Activated naive CD4-positive, alpha-beta T cell treated with anti-CD3 and anti-CD28 coated beads, Interleukin-2, amount 10 ng/mL, durations not matched to agents 7 days and 5 days (primary cell): ENCODE measurements at regions of chr4 and their contacts with region 1.

Region 1: GRCh38 chr4:7802093-7802726 is 137.5 kb downstream of the AFAP1 start:
- DNase-seq: peak; percentile 88
- H3K4me3 Mint-ChIP-seq: no peak overlapping the region
- H3K27ac Mint-ChIP-seq: peak overlapping the region; percentile 15
- H3K4me1 Mint-ChIP-seq: peaks cover 17% of the 10 kb centered on the region
- H3K27me3 Mint-ChIP-seq: no peaks in the 10 kb centered on the region

Region 2: DNA sequence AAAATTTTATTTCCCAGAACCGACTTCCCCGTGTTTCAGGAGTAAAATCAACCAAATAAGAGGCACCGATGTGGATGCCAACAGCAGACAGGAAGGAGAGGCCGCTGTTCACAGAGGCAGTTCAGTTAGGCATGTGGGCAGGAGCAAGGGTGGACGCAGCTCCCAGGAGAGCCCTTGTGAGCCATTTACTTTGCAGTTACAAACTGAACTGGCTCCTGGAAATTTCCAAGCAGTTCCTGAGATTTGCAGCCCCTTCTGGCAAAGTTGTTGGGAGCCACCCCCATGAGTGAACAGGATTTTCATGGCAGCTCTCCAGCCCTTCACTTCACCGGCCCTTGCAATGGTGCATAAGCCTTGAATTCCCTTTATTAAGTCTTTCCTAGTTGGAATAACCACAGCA is 51.7 kb before region 1 on chr4:
- CTCF ChIA-PET with region 1: no interaction called
- DNase-seq: no peak
- H3K4me3 Mint-ChIP-seq: no peak overlapping the region
- H3K27ac Mint-ChIP-seq: no peak overlapping the region
- H3K4me1 Mint-ChIP-seq: peaks cover 42% of the 10 kb centered on the region
- H3K27me3 Mint-ChIP-seq: peaks cover 10% of the 10 kb centered on the region

Region 3: GRCh38 chr4:7770224-7771050 is 31.8 kb before region 1 on chr4:
- CTCF ChIA-PET with region 1: interaction called, 99 read pairs
- DNase-seq: peak; percentile 52
- H3K4me3 Mint-ChIP-seq: peak overlapping the region; percentile 63
- H3K27ac Mint-ChIP-seq: peak overlapping the region; percentile 84
- H3K4me1 Mint-ChIP-seq: peaks cover 29% of the 10 kb centered on the region
- H3K27me3 Mint-ChIP-seq: no peaks in the 10 kb centered on the region

Region 4: DNA sequence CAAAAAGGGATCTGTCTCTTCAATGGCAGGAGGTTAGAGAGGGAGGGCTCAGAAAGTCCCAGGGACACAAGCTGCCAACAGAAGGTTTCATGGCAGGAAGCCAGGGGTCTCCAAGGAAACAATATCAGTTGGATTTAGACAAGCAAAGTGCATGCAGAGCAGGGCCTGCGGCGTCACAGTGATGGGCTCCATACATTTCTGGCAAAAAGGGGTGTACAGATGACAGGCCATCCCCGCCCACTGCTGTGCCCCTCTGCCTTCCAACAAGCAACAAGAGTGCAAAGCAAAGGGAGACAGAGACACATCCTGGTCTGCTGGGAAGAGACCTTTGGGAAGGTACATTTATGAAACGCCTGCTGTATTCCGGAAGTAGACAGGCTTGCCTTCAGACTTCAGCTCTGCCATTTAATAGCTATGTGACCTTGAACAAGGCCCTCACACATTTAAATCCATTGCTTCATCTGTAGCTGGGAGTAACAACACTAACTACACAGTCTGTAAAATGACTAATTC is 16.2 kb after region 1 on chr4:
- CTCF ChIA-PET with region 1: interaction called, 30 read pairs
- DNase-seq: no peak
- H3K4me3 Mint-ChIP-seq: no peak overlapping the region
- H3K27ac Mint-ChIP-seq: no peak overlapping the region
- H3K4me1 Mint-ChIP-seq: peaks cover 15% of the 10 kb centered on the region
- H3K27me3 Mint-ChIP-seq: no peaks in the 10 kb centered on the region

Region 5: DNA sequence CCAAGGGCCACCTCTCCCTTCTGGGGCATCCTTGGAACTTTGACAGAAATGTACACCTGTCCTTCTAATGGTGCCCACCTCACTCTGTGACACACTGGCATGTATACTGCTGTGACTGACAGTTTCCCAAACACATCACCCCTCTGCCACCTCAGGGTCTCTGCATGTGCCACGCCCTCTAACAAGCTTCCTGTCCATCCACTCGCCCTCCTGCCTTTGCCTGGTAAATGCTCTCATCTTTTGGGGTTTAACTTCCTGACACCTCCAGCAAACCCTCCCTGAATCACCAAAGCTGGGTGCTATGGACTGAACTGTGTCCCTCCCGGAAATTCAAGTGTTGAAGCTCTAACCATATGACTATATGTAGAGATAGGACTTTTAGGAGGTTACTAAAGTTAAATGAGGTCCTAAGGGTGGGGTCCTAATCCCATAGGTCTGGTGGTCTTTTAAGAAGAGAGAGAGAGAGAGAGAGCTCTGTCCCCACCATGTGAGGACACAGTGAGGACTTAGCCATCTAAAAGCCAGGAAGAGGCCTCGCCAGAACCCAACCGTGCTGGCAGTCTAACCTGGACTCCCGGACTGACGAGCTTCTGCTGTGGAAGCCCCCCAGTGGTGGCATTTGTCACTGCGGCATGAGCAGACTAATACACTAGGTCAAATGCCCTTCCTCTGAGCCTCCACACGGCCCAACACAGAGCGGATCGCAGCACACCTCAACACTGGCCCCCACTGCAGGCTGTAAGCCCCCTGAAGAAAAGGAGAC is 41.8 kb after region 1 on chr4:
- CTCF ChIA-PET with region 1: interaction called, 56 read pairs
- DNase-seq: peak; percentile 80
- H3K4me3 Mint-ChIP-seq: no peak overlapping the region
- H3K27ac Mint-ChIP-seq: no peak overlapping the region
- H3K4me1 Mint-ChIP-seq: peaks cover 22% of the 10 kb centered on the region
- H3K27me3 Mint-ChIP-seq: no peaks in the 10 kb centered on the region

Region 6: GRCh38 chr4:7863911-7864681 is 61.9 kb after region 1 on chr4:
- CTCF ChIA-PET with region 1: interaction called, 10 read pairs
- DNase-seq: peak; percentile 38
- H3K4me3 Mint-ChIP-seq: peak overlapping the region; percentile 4
- H3K27ac Mint-ChIP-seq: peak overlapping the region; percentile 60
- H3K4me1 Mint-ChIP-seq: peaks cover 27% of the 10 kb centered on the region
- H3K27me3 Mint-ChIP-seq: peaks cover 4% of the 10 kb centered on the region

Region 7: DNA sequence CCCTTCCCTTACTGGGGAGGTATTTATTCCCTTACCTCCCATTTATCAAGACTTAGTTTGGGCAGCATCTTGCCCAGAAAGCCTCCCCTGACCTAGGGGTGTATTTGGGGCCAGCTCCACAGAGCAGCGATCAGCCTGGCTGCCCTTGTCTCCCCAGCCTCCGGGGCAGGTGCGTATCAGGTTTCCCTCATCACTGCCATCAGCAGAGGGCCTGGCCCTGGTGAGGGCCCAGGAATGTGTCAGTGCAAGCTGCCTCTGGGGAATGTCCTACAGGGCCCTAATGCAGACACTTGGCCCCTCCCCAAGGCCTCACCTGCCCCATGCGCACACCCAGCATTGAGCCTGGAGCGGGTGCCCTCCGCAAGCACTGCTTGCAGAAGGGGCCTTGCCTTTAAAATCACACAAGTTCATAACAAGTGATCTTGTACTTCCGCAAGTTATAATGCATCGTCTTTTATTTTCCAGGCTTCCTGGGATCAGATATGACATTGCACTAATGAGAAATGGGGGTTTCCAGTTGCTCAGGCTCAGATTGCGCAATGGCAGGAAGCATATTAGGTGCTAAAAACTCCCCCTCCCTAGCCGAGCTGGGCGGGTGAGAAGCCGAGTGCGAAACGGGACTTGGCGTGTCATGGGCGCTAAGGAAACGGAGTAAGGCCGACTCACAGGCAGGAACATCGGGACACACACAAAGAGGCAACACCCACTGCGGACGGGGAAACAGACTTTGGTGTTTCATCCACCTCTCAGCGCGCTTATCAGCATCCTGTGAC is 162.9 kb after region 1 on chr4:
- CTCF ChIA-PET with region 1: interaction called, 30 read pairs
- DNase-seq: peak; percentile 46
- H3K4me3 Mint-ChIP-seq: no peak overlapping the region
- H3K27ac Mint-ChIP-seq: peak overlapping the region; percentile 69
- H3K4me1 Mint-ChIP-seq: peaks cover 79% of the 10 kb centered on the region
- H3K27me3 Mint-ChIP-seq: peaks cover 16% of the 10 kb centered on the region